ENCODE measurements at regions of chr3 and their contacts with region 1.

Region 1: DNA sequence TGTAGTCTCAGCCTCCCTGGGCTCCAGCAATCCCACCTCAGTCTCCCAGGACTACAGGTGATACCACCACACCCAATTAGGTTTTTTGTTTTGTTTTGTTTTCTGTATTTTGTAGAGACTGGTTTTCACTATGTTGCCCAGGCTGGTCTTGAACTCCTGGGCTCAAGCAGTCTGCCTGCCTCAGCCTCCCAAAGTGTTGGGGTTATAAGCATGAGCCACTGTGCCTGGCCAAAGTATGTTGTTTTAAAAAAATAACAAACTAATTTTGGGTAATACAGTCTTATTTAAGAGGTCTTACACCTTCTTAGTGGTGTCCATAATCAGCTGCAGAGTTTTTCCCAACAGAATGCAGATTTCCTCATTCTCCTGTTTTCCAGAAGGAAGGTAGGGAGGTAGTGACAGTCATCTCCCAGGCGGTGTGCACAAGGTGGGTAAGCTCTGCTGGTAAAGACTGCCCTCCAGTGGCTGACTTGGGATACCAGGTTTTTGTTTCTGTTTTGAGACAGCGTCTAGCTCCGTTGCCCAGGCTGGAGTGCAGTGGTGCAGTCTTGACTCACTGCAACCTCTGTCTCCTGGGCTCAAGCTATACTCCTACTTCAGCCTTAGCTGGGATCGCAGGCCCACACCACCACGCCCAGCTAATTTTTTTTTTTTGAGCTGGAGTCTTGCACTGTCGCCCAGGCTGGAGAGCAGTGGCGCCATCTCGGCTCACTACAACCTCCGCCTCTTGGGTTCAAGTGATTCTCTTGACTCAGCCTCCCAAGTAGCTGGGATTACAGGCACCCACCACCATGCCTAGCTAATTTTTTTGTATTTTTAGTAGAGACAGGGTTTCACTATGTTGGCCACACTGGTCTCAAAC is 58.4 kb downstream of the MAP6D1 start:
- DNase-seq: peak; percentile 81 to 87
- H3K4me3 ChIP-seq: no peak overlapping the region
- H3K27ac ChIP-seq: peak overlapping the region; percentile 92 to 97 (median 93)
- H3K4me1 ChIP-seq: peaks cover 43 to 46% of the 10 kb centered on the region in 2 donors
- H3K27me3 ChIP-seq: no peaks in the 10 kb centered on the region
- CTCF ChIP-seq: peak; percentile 44 to 87 (median 74)
- POLR2A ChIP-seq: no peak

Region 2: DNA sequence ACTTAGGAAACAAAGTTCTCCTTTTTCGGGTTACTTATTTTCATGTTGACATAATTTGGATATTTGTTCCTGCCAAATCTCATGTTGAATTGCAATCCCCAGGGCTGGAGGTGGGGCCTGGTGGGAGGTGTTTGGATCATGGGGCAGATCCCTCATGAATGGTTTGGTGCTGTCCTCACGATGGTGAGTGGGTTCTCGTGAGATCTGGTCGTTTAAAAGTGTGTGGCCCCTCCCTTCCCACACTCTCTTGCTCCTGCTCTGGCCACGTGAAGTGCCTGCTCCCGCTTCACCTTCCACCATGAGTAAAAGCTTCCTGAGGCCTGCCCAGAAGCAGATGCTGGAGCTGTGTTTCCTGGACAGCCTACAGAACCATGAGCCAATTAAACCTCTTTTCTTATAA is 294.8 kb before region 1 on chr3:
- intact Hi-C with region 1: loop called (anchors 5 kb)
- DNase-seq: no peak
- H3K4me3 ChIP-seq: no peak overlapping the region
- H3K27ac ChIP-seq: no peak overlapping the region
- H3K4me1 ChIP-seq: peaks cover 0 to 4% of the 10 kb centered on the region in 2 donors
- H3K27me3 ChIP-seq: no peaks in the 10 kb centered on the region
- CTCF ChIP-seq: no peak
- POLR2A ChIP-seq: no peak